PC-9 (cell line): ENCODE measurements at regions of chr9 and their contacts with region 1.

Region 1: GRCh38 chr9:116572095-116572748 is 114.9 kb upstream of the TRIM32 start:
- DNase-seq: peak; percentile 57 to 75
- H3K4me3 ChIP-seq: no peak overlapping the region
- H3K27ac ChIP-seq: no peak overlapping the region
- H3K4me1 ChIP-seq: peaks cover 15% of the 10 kb centered on the region; the same call in 1 of the 2 replicates
- H3K27me3 ChIP-seq: no peaks in the 10 kb centered on the region
- CTCF ChIP-seq: peak; percentile 94

Region 2: DNA sequence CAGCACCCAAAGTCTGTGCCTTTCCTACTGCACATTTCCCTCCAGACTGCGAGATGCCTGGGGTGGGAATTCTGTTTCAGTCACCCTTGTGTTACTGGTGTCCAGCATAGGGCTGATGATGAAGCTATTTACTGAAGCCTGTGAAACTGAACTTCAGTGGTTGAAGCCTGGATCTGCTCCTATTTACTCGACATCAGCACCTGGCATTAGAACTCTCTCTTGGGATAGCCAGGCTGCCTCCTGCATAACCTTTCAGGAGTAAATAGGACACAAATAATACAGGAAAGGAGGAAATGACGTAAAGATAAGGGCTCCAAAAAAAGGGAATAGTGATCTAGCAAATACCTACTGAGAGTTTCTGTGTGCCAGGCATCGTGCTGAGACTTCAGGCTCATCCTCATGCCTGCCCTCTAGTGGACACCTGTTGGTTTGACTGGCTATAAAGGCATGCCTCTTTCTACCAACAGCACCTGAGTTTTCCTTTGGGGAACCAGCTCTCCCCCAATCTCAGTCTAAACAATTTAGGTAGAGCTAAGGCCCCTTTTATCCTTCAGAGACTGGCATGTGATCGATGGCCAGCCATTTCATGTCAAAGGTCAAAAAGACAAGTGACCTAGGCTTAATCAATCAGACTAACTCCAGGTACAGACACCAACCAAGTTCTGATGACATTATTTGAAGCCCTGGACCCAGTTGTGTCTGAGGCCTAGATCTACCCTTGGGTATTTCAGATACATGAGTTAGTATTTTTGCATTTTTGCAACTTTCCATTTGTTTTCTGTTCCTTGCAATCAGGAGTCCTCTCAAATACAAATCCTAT is 77.2 kb before region 1 on chr9:
- CTCF ChIA-PET with region 1: no interaction called
- POLR2A ChIA-PET with region 1: no interaction called
- intact Hi-C with region 1: loop called (anchors 2 kb)
- DNase-seq: peak in 1 of 2 experiments; percentile 16
- H3K4me3 ChIP-seq: no peak overlapping the region
- H3K27ac ChIP-seq: no peak overlapping the region
- H3K4me1 ChIP-seq: no peaks in the 10 kb centered on the region
- H3K27me3 ChIP-seq: no peaks in the 10 kb centered on the region
- CTCF ChIP-seq: peak; percentile 79

Region 3: GRCh38 chr9:116646661-116647512 is 74.7 kb after region 1 on chr9:
- CTCF ChIA-PET with region 1: no interaction called
- POLR2A ChIA-PET with region 1: no interaction called
- intact Hi-C with region 1: loop called (anchors 2 kb)
- DNase-seq: peak in 1 of 2 experiments; percentile 7
- H3K4me3 ChIP-seq: no peak overlapping the region
- H3K27ac ChIP-seq: no peak overlapping the region
- H3K4me1 ChIP-seq: no peaks in the 10 kb centered on the region
- H3K27me3 ChIP-seq: no peaks in the 10 kb centered on the region
- CTCF ChIP-seq: peak; percentile 72